Right ventricle myocardium superior (tissue), 1 donor: ENCODE measurements at regions of chr10 and their contacts with region 1.

Region 1: DNA sequence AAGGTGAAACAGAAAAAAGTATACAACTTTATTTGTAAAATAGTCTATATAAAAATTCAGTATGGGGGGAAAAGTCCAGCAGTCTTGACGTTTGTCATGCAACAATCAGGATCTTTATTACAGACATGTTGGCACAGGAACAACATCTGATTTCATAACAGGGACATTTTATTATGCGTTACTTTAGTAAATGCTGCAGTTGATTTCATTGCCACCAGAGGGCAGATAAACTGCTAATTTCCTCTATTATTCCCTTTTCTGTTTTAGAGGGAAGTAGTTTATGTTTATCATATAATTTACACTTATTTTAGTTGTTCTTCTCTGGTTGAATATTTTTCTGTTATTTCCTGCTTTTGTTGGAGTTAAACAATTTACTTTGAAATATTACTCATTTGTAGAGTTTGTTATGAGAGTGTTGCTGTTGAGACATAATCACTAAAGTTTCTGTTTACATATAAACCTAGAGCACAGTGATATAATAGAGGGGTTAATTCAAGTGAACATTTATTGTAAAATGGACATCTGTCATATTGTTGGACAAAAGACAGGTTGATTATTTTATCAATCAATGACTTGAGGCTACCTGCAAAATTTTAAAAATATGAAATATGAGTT is 3.3 kb downstream of the PLXDC2 start:
- DNase-seq: no peak
- ATAC-seq: no peak

Region 2: GRCh38 chr10:19730907-19731217 is 88.7 kb before region 1 on chr10:
- intact Hi-C with region 1: no loop called
- DNase-seq: no peak
- ATAC-seq: no peak

Region 3: GRCh38 chr10:19922236-19922963 is 102.9 kb after region 1 on chr10:
- intact Hi-C with region 1: loop called (anchors 10 kb)
- DNase-seq: no peak
- ATAC-seq: peak; percentile 49

Region 4: GRCh38 chr10:19944911-19945663 is 125.6 kb after region 1 on chr10:
- intact Hi-C with region 1: loop called (anchors 5 kb)
- DNase-seq: peak; percentile 63
- ATAC-seq: peak; percentile 90

Region 5: DNA sequence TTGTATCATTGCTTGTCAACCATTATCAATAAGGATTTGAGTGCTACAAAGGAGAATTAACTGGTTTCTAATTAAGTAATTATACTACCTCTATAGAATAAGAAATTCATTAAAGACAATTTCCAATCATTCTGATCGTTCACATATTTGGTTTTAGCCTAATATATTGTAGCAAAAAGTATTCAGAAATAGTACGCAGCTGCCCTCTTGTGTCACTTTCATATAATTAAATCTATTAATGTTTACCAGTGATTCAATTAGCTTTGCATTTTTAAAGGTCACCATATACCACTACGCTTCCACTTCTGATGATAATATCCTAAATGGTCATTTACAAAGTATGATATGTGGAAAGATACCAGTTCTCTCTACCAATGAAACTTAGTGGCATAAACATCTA is 949.3 kb after region 1 on chr10:
- intact Hi-C with region 1: loop called (anchors 10 kb)
- DNase-seq: no peak
- ATAC-seq: peak; percentile 54